ENCODE measurements at regions of chr13 and their contacts with region 1.

Region 1: DNA sequence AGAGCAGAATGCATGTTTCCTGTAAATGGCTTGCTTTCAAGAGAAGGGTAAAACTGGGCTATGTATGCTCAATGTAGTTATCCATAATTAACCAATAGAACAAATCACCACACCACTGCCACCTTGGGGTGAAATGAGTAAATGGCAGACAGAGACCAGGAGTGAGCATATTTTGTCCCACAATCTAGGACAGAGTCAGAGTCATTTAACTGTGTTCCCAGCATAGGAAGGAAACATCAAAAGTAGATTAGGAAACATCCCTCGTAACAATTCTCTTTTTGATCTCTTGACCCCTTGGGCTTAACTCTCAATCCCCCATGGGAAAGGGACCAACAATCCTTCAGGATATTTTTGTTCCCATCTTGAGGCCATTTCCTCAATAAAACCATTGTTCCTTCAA is 224.8 kb downstream of the NHLRC3 start:
- DNase-seq: no peak
- H3K4me3 ChIP-seq: no peak overlapping the region
- H3K27ac ChIP-seq: no peak overlapping the region
- H3K4me1 ChIP-seq: peaks cover 0 to 5% (median 0%) of the 10 kb centered on the region in 4 donors
- H3K27me3 ChIP-seq: no peaks in the 10 kb centered on the region
- CTCF ChIP-seq: peak in 3 of 4 experiments; percentile 22 to 56 (median 42)
- EP300 ChIP-seq: no peak
- POLR2A ChIP-seq: no peak

Region 2: DNA sequence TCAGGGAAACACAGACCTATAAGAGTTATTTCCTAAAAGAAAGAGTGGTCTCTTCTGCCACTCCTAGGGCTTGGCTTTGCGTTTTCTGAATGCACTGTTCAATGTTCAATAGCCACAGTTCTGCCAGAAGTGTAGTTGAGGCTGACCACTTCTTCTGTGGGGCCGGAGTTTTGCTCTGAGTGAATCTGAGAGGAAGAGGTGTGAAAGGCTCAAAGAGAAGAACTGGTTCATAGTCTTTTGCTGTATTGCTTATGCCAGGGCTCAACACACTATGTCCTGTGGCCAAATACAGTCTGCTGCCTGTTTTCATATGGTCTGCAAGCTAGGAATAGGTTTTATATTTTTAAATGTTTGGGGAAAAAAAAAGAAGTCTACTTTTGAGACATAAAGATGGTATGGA is 400.6 kb before region 1 on chr13:
- intact Hi-C with region 1: no loop called
- DNase-seq: no peak
- H3K4me3 ChIP-seq: no peak overlapping the region
- H3K27ac ChIP-seq: no peak overlapping the region
- H3K4me1 ChIP-seq: no peaks in the 10 kb centered on the region
- H3K27me3 ChIP-seq: no peaks in the 10 kb centered on the region
- CTCF ChIP-seq: no peak
- EP300 ChIP-seq: no peak
- POLR2A ChIP-seq: no peak

Region 3: DNA sequence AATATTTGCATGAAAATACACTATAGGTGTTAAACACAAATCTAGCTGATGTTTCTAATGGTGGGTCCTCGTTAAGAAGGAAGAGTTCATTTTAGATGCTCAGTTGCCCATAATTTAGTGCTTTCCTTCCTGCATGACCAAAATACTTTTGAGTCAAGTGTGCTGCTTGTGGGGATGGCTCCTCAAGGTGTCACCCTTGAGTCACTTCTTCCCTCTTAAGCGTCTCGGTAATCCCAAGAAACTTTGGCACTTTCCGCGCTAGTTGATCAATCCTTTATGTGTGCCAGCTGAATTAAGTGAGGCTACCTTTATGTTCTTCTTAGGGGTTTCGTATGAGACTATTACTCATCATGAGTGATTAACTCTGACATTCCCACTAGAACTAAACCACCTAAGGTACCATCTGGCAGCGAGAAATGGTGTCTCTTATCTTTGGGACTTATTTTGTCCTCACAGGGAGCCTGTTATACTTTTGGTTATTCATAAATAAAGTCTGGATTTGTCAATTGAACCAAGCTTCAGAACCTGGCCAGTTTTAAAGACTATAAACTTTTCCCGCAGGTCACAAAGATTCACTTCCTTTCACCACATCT is 118.0 kb before region 1 on chr13:
- intact Hi-C with region 1: loop called (anchors 10 kb)
- DNase-seq: peak; percentile 77
- H3K4me3 ChIP-seq: no peak overlapping the region
- H3K27ac ChIP-seq: no peak overlapping the region
- H3K4me1 ChIP-seq: no peaks in the 10 kb centered on the region
- H3K27me3 ChIP-seq: peaks cover 0 to 7% (median 0%) of the 10 kb centered on the region in 3 donors
- CTCF ChIP-seq: peak; percentile 34 to 69 (median 46)
- EP300 ChIP-seq: no peak
- POLR2A ChIP-seq: no peak

Measured in sigmoid colon (tissue), 7 donors.